ENCODE measurements at regions of chr13 and their contacts with region 1.

Region 1: DNA sequence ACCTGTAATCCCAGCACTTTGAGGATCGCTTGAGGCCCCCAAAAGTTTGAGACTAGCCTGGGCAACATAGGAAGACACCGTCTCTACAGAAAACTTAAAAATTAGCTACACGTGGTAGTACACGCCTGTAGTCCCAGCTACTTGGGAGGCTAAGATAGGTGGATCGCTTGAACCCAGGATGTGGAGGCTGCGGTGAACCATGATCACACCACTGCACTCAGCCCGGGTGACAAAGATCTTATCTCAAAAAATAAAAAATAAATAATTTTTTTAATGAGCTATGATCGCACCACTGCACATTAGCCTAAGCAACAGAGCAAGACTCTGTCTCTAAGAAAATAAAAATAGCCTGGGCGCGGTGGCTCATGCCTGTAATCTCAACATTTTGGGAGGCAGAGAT is 6.6 kb downstream of the RCBTB2 start:
- DNase-seq: peak in 3 of 5 donors; percentile 34 to 39 (median 35)
- H3K4me3 ChIP-seq: no peak overlapping the region
- H3K4me3 Mint-ChIP-seq: peak overlapping the region in 2 of 8 donors; percentile 38 to 39
- H3K27ac ChIP-seq: no peak overlapping the region
- H3K27ac Mint-ChIP-seq: peak overlapping the region in 2 of 7 donors; percentile 57 to 63
- H3K4me1 ChIP-seq: peaks cover 39% of the 10 kb centered on the region
- H3K4me1 Mint-ChIP-seq: peaks cover 16 to 47% (median 24%) of the 10 kb centered on the region in 4 donors
- H3K27me3 ChIP-seq: no peaks in the 10 kb centered on the region
- H3K27me3 Mint-ChIP-seq: no peaks in the 10 kb centered on the region

Region 2: DNA sequence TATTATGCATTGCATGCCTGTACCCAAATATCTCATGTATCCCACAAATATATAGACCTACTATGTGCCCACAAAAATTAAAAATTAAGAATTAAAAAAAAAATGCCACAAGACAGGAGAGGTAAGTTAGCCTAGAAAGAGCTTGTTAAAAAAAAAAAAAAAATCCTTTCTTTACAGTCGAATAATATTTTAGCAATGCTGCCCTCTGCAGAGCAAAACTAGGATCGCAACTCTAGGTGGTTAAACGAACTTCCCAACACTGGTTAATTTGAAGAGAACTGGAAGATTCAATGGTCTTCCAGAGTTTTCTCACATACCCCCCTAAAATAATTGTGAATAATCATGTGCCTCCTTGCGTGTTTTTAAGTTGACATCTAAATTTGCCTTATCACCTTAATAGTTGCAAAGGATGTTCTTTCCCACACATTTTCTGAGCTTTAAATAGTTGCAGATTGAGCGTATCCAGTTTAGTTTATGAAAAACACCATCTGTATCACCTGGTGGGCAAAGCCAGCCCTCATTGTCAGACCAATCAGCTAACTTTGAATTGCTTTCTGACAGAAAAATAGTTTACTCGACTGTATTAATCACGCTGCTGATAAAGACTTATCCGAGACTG is 54.0 kb after region 1 on chr13:
- CTCF ChIA-PET with region 1: interaction called, 10 read pairs
- POLR2A ChIA-PET with region 1: interaction called, 56 read pairs
- intact Hi-C with region 1: no loop called
- DNase-seq: peak; percentile 64 to 74 (median 70)
- H3K4me3 ChIP-seq: no peak overlapping the region
- H3K4me3 Mint-ChIP-seq: peak overlapping the region in 1 of 8 donors; percentile 31
- H3K27ac ChIP-seq: no peak overlapping the region
- H3K27ac Mint-ChIP-seq: peak overlapping the region in 2 of 7 donors; percentile 0 to 43
- H3K4me1 ChIP-seq: peaks cover 19% of the 10 kb centered on the region
- H3K4me1 Mint-ChIP-seq: peaks cover 4 to 28% (median 13%) of the 10 kb centered on the region in 4 donors
- H3K27me3 ChIP-seq: no peaks in the 10 kb centered on the region
- H3K27me3 Mint-ChIP-seq: peaks cover 0 to 4% of the 10 kb centered on the region in 2 donors

Measured in CD4-positive, alpha-beta memory T cell (primary cell).